A673 (cell line): ENCODE measurements at regions of chr9 and their contacts with region 1.

Region 1: GRCh38 chr9:128420651-128421481 is at the start of gene CERCAM:
- DNase-seq: peak; percentile 66
- H3K4me3 ChIP-seq: peak within 1 kb of the TSS; percentile 91
- H3K27ac ChIP-seq: peak within 1 kb of the TSS; percentile 45
- H3K4me1 ChIP-seq: peaks cover 31% of the 10 kb centered on the region
- H3K27me3 ChIP-seq: no peaks in the 10 kb centered on the region
- CTCF ChIP-seq: no peak
- total RNA-seq, gene CERCAM: 10.1 and 14.7 TPM in 2 replicates

Region 2: GRCh38 chr9:128206916-128207910 is 213.7 kb before region 1 on chr9:
- CTCF ChIA-PET with region 1: no interaction called
- POLR2A ChIA-PET with region 1: interaction called, 13 read pairs
- intact Hi-C with region 1: no loop called
- DNase-seq: no peak
- H3K4me3 ChIP-seq: no peak overlapping the region
- H3K27ac ChIP-seq: no peak overlapping the region
- H3K4me1 ChIP-seq: peaks cover 3% of the 10 kb centered on the region
- H3K27me3 ChIP-seq: no peaks in the 10 kb centered on the region
- CTCF ChIP-seq: no peak

Region 3: DNA sequence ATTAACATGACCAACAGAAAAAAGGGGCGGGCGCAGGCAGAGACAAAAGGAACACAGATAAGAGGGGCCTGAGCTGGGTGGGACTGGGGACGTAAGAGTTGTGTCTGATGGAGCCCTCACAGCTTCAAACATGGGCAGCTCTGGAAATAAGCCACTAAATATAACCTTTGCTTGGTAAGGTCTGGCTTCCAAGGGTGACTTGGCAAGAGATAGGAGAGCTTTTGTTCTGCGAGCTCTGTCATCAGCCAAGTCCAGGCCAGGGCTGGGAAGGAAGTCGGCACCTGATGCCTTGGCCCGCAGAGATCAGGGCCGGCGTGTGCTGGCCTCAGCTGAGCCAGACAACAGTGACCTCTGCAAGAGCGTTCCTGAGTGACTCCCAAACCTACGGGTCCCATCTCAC is 110.4 kb before region 1 on chr9:
- CTCF ChIA-PET with region 1: no interaction called
- POLR2A ChIA-PET with region 1: interaction called, 17 read pairs
- intact Hi-C with region 1: no loop called
- DNase-seq: no peak
- H3K4me3 ChIP-seq: no peak overlapping the region
- H3K27ac ChIP-seq: no peak overlapping the region
- H3K4me1 ChIP-seq: no peaks in the 10 kb centered on the region
- H3K27me3 ChIP-seq: no peaks in the 10 kb centered on the region
- CTCF ChIP-seq: no peak

Region 4: DNA sequence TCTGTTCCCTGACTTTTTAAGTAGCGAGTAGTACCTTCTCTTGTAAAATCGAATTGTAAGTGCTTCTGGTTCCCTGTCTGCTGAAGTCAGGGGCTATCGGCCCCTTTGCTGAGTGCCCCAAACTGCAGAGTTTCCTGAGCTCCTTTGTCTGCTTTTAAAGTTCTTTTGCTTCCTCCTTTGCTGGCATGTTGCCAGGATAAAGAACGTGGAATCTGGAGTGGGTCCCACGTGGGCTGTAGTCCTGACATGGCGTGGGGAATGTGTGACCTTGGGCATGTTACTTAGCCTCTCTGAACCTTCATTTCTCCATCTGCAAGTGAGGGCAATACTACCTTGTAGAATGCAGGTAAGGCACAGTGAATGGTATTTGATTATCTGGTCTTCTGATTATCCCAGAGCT is 21.3 kb after region 1 on chr9:
- CTCF ChIA-PET with region 1: interaction called, 11 read pairs
- POLR2A ChIA-PET with region 1: no interaction called
- intact Hi-C with region 1: no loop called
- DNase-seq: no peak
- H3K4me3 ChIP-seq: no peak overlapping the region
- H3K27ac ChIP-seq: no peak overlapping the region
- H3K4me1 ChIP-seq: peaks cover 3% of the 10 kb centered on the region
- H3K27me3 ChIP-seq: no peaks in the 10 kb centered on the region
- CTCF ChIP-seq: no peak